AG04450 (cell line): ENCODE measurements at regions of chr6 and their contacts with region 1.

Region 1: DNA sequence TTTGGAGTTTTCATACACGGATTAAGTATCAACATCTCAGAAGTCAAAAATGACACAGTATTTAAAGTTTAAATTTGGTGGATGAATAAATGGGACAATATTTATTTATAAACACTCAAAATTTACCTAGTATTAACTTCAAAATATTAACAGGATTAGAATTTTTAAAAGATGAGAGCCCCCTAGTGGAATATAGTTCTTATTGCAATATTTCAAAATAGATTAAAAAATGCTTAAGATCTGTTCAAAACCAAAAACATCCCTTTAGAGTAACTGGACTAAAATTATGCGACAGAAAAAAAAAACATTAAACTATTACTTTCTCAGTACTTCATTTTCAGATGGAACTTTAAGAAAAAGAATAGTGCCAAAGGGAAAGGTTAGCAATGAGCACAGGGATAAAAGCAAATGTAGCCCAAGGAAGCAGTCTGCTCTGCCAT is 56.6 kb downstream of the SNX14 start:
- DNase-seq: no peak
- H3K4me3 ChIP-seq: no peak overlapping the region
- H3K27ac ChIP-seq: no peak overlapping the region
- H3K27me3 ChIP-seq: no peaks in the 10 kb centered on the region
- CTCF ChIP-seq: peak; percentile 42

Region 2: DNA sequence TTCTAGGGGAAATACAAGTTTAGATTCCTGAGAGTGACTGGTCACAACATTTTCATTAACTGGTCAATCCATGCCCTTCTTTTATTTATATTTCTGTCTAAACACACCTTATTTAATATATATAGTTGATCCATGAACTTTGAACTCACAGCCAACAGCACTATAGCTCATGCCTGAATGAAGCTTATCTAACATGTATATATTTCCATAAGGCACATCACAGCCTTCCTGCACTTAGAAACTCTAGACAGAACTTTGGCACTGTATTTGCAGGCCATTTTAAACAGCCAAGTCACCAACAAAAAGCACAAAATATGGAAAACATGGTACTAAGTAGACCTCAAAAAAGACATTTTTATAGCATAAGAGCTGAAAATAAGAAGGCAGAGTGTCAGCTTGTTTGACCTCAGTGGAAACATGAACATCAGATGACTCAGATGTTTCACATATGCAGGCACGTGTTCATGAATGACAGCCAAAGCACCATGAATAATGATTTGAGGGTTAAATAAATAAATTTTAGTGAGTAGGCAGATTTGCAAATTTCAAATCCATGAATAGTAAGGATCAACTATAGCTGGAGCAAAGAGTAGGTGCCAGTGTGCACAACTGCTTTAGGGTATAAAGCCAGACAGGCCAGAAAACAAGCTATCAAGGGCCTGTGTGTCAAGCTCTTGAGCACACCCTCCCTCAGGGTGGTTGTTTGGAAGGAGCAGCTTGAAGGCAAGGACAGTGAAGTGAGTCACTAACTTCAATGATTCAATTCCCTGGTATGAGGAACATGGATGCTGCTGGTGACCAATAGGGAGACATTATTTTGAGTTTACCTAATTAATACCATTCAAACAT is 176.1 kb before region 1 on chr6:
- CTCF ChIA-PET with region 1: interaction called, 81 read pairs
- POLR2A ChIA-PET with region 1: no interaction called
- DNase-seq: peak; percentile 90
- H3K4me3 ChIP-seq: no peak overlapping the region
- H3K27ac ChIP-seq: peak overlapping the region; percentile 62
- H3K27me3 ChIP-seq: no peaks in the 10 kb centered on the region
- CTCF ChIP-seq: no peak

Region 3: DNA sequence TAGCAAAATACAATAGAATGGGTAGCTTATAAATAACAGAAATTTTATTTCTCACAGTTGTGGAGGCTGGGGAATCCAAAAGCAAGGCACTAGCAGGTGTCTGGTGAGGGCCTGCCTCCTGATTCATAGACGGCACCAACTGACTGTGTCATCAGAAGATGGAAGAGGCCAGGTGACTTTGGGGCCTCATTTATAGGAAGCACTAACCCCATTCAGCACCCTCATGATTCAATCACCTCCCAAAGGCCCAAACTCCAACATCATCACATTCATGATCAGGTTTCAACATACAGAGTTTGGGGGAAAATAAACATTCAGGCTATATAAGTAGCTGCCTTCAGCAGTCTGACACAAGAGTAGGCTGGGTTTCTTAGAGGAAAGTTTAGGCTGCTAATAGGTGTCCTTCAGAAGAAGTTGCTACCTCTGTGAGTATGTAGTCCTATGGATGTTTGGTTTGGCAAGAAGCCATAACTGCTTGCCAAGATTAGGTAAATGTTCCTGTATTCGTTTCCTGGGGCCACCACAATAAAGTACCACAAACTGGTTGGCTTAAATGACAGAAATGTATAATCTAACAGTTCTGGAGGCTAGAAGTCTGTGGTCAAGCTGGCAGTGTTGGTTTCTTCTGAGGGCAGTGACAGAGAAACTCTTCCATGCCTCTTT is 38.3 kb before region 1 on chr6:
- CTCF ChIA-PET with region 1: interaction called, 14 read pairs
- POLR2A ChIA-PET with region 1: no interaction called
- DNase-seq: no peak
- H3K4me3 ChIP-seq: no peak overlapping the region
- H3K27ac ChIP-seq: no peak overlapping the region
- H3K27me3 ChIP-seq: no peaks in the 10 kb centered on the region
- CTCF ChIP-seq: no peak

Region 4: DNA sequence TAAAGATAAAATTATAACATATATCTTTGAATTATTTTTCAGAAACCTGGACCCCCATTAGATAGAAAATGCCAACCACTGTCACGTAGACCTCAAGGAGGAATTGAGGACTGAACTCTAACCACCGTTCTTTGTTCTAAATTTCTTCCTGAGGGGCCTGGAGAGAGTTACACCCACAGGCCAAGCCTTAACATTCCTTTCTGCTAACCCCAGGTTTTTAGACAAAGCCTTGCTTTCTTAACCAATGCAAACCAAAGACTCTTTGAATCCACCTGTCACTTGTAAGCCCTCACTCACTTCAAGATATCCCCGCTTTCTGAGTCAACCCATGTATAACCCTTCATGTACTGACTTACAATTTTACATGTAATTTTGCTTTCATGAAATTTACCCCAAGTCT is 15.6 kb after region 1 on chr6:
- CTCF ChIA-PET with region 1: interaction called, 25 read pairs
- POLR2A ChIA-PET with region 1: no interaction called
- DNase-seq: no peak
- H3K4me3 ChIP-seq: no peak overlapping the region
- H3K27ac ChIP-seq: no peak overlapping the region
- H3K27me3 ChIP-seq: no peaks in the 10 kb centered on the region
- CTCF ChIP-seq: no peak